ENCODE measurements at regions of chr11 and their contacts with region 1.

Region 1: GRCh38 chr11:121451986-121452608 is at the start of gene SORL1:
- DNase-seq: peak; percentile 62
- ATAC-seq: peak; percentile 88
- H3K4me3 ChIP-seq: peak within 1 kb of the TSS; percentile 93 to 96 (median 94)
- H3K27ac ChIP-seq: peak within 1 kb of the TSS; percentile 73
- H3K4me1 ChIP-seq: peaks cover 80% of the 10 kb centered on the region
- H3K27me3 ChIP-seq: peaks cover 0 to 6% of the 10 kb centered on the region in 2 experiments; a peak in 1 of 5 replicates
- CTCF ChIP-seq: peak; percentile 81
- EP300 ChIP-seq: no peak
- POLR2A ChIP-seq: peak; percentile 71 to 75; a peak in 3 of 4 replicates
- RAD21 ChIP-seq: peak; percentile 83
- total RNA-seq, gene SORL1: 10.5 and 21.3 TPM in 2 replicates

Region 2: DNA sequence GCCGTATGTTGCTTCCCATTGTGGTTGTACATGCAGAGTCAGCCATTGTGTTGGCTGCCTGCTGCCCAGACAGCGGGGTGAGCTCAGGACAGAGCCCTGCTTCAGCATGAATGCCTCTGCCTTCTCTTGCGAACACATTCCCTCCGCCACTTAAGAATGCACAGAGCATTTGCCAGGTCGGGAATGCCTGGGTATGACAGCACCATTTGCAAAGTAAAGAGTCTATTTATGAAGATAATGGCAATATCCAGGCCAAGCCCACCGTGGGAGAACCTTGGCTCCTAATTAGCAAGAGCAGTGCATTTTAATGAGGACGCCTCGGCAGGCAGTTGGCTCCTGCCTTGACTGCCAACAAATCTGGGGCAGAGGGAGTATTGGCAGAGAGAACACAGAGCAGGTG is 62.4 kb before region 1 on chr11:
- CTCF ChIA-PET with region 1: no interaction called
- POLR2A ChIA-PET with region 1: no interaction called
- in situ Hi-C with region 1: no loop called
- intact Hi-C with region 1: no loop called
- DNase-seq: no peak
- ATAC-seq: no peak
- H3K4me3 ChIP-seq: no peak overlapping the region
- H3K27ac ChIP-seq: no peak overlapping the region
- H3K4me1 ChIP-seq: peaks cover 14% of the 10 kb centered on the region
- H3K27me3 ChIP-seq: peaks cover 0 to 18% of the 10 kb centered on the region in 2 experiments; a peak in 2 of 5 replicates
- CTCF ChIP-seq: no peak
- EP300 ChIP-seq: no peak
- POLR2A ChIP-seq: no peak
- RAD21 ChIP-seq: no peak

Region 3: GRCh38 chr11:121466063-121466794 is 14.1 kb after region 1 on chr11:
- CTCF ChIA-PET with region 1: no interaction called
- POLR2A ChIA-PET with region 1: interaction called, 16 read pairs
- in situ Hi-C with region 1: no loop called
- intact Hi-C with region 1: no loop called
- DNase-seq: peak; percentile 76
- ATAC-seq: peak; percentile 85
- H3K4me3 ChIP-seq: no peak overlapping the region
- H3K27ac ChIP-seq: no peak overlapping the region
- H3K4me1 ChIP-seq: peaks cover 71% of the 10 kb centered on the region
- H3K27me3 ChIP-seq: no peaks in the 10 kb centered on the region
- CTCF ChIP-seq: no peak
- EP300 ChIP-seq: peak in 1 of 2 experiments; percentile 12; a peak in 1 of 4 replicates
- POLR2A ChIP-seq: no peak
- RAD21 ChIP-seq: no peak

Region 4: DNA sequence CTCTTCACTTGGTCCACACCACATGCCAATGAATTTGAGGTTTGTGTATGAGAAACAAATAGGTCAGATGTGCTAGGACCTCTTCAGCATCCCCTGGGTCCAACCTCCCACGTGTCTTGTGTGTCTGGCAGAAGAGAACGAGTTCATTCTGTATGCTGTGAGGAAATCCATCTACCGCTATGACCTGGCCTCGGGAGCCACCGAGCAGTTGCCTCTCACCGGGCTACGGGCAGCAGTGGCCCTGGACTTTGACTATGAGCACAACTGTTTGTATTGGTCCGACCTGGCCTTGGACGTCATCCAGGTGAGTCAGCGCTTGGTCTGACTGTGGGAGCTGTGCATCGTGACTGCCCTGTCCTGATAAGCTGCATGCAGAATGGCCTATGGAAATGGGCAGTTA is 101.7 kb after region 1 on chr11:
- CTCF ChIA-PET with region 1: no interaction called
- POLR2A ChIA-PET with region 1: no interaction called
- in situ Hi-C with region 1: no loop called
- intact Hi-C with region 1: loop called (anchors 5 kb)
- DNase-seq: peak; percentile 91
- ATAC-seq: peak; percentile 97
- H3K4me3 ChIP-seq: no peak overlapping the region
- H3K27ac ChIP-seq: peak overlapping the region; percentile 55
- H3K4me1 ChIP-seq: peaks cover 32% of the 10 kb centered on the region
- H3K27me3 ChIP-seq: no peaks in the 10 kb centered on the region
- CTCF ChIP-seq: 0 out of 2 replicates have a peak, but pooled peaks have one; percentile 11
- EP300 ChIP-seq: peak; percentile 15 to 66; a peak in 2 of 4 replicates
- POLR2A ChIP-seq: peak in 1 of 2 experiments; percentile 34; a peak in 1 of 4 replicates
- RAD21 ChIP-seq: no peak

Region 5: GRCh38 chr11:121563900-121564822 is 112.1 kb after region 1 on chr11:
- CTCF ChIA-PET with region 1: no interaction called
- POLR2A ChIA-PET with region 1: interaction called, 21 read pairs
- in situ Hi-C with region 1: loop called (anchors 5 kb)
- intact Hi-C with region 1: no loop called
- DNase-seq: peak; percentile 50
- ATAC-seq: peak; percentile 33
- H3K4me3 ChIP-seq: no peak overlapping the region; a peak in 1 of 6 replicates
- H3K27ac ChIP-seq: peak overlapping the region; percentile 94
- H3K4me1 ChIP-seq: peaks cover 90% of the 10 kb centered on the region
- H3K27me3 ChIP-seq: no peaks in the 10 kb centered on the region
- CTCF ChIP-seq: 0 out of 2 replicates have a peak, but pooled peaks have one; percentile 7
- EP300 ChIP-seq: peak in 1 of 2 experiments; percentile 54; a peak in 2 of 4 replicates
- POLR2A ChIP-seq: no peak
- RAD21 ChIP-seq: no peak

Measured in HepG2 (cell line).